SK-N-SH (cell line): ENCODE measurements at regions of chr4 and their contacts with region 1.

Region 1: DNA sequence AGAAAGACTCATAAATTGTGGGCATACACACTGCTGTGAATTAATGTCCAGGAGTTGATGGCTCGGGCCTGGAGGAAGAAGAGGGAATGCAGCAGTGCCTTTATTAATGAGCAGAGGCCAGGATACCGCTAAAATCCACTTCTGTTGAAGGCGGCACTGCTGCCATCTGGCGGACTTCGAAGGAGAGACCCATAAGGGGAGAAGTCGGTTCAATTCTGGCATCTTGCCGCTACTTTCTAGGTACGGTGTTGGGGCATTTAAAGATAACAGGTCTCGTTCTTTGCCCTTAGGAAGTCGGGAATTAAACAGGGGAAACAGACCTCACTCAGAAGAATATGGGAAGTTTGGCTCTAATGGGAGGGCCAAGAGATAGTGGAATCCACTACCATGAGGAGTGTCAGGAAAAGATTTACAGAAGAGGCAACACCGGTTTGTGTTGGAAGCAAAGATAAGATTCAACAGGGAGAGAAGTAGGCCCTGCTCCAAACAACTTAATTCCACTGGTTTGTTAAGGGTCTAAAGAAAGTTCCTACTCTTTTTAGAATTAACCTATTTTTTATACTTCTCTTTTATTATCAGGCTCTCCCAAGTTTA is 133.6 kb upstream of the GIMD1 start:
- DNase-seq: peak; percentile 62
- H3K4me3 ChIP-seq: peak overlapping the region in 1 of 2 experiments; percentile 16; a peak in 1 of 4 replicates
- H3K27ac ChIP-seq: no peak overlapping the region
- H3K4me1 ChIP-seq: no peaks in the 10 kb centered on the region; a peak in 1 of 4 replicates
- H3K27me3 ChIP-seq: no peaks in the 10 kb centered on the region
- CTCF ChIP-seq: peak; percentile 82
- EP300 ChIP-seq: no peak
- RAD21 ChIP-seq: peak; percentile 82

Region 2: DNA sequence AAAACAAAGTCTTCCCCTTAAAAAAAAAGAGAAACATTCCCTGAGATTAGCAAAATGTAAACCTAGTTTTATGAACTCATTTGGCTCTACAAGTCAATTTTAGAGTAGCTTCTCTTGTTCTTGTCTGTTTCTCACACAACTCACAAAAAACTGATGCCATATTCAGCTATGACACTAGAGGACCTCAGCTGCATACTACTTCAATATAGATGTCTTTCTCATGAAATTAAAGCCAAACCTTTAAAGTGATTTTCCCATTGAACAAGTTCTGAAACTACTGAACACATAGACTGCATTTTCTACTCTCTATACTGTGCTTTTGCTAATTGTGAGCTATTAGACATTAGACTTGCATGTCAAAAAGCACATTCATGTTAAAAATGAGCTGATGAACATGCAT is 236.0 kb before region 1 on chr4:
- CTCF ChIA-PET with region 1: interaction called, 21 read pairs
- POLR2A ChIA-PET with region 1: no interaction called
- DNase-seq: peak; percentile 13
- H3K4me3 ChIP-seq: no peak overlapping the region; a peak in 1 of 4 replicates
- H3K27ac ChIP-seq: no peak overlapping the region
- H3K4me1 ChIP-seq: peaks cover 0 to 12% of the 10 kb centered on the region in 2 experiments; a peak in 2 of 4 replicates
- H3K27me3 ChIP-seq: no peaks in the 10 kb centered on the region
- CTCF ChIP-seq: peak; percentile 85
- EP300 ChIP-seq: no peak
- RAD21 ChIP-seq: peak; percentile 81

Region 3: GRCh38 chr4:106369456-106370060 is 132.6 kb before region 1 on chr4:
- CTCF ChIA-PET with region 1: interaction called, 23 read pairs
- POLR2A ChIA-PET with region 1: no interaction called
- DNase-seq: peak; percentile 14
- H3K4me3 ChIP-seq: peak overlapping the region in 1 of 2 experiments; percentile 21; a peak in 1 of 4 replicates
- H3K27ac ChIP-seq: peak overlapping the region; percentile 28 to 41; a peak in 2 of 4 replicates
- H3K4me1 ChIP-seq: peaks cover 0 to 8% of the 10 kb centered on the region in 2 experiments; a peak in 2 of 4 replicates
- H3K27me3 ChIP-seq: no peaks in the 10 kb centered on the region
- CTCF ChIP-seq: peak; percentile 82
- EP300 ChIP-seq: no peak
- RAD21 ChIP-seq: peak; percentile 78

Region 4: DNA sequence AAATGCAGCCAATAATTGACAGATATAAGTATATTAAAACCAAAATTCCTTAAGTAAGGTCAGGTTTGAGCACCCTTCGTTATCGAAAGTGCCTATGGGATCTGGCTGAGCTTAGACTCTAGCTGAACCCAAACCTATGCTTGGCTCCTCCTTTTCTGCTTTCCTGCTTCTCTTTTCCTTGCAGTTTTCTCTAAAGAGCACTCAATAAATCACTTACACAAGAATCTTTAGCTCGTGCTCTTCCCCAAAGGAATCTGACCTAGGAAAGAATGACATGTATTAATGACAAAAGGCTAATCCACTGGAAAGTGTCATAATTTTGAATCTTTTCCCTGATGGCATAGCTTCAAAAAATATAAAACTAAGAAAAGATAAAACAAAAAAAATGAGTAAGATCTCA is 251.2 kb after region 1 on chr4:
- CTCF ChIA-PET with region 1: no interaction called
- POLR2A ChIA-PET with region 1: no interaction called
- DNase-seq: no peak
- H3K4me3 ChIP-seq: no peak overlapping the region
- H3K27ac ChIP-seq: peak overlapping the region in 1 of 2 experiments; percentile 60; a peak in 1 of 4 replicates
- H3K4me1 ChIP-seq: no peaks in the 10 kb centered on the region
- H3K27me3 ChIP-seq: no peaks in the 10 kb centered on the region
- CTCF ChIP-seq: no peak
- EP300 ChIP-seq: no peak
- RAD21 ChIP-seq: no peak